ENCODE measurements at regions of chr14 and their contacts with region 1.

Region 1: GRCh38 chr14:86038387-86039042 is 508.6 kb downstream of the FLRT2 start:
- H3K4me3 Mint-ChIP-seq: no peak overlapping the region
- H3K27ac Mint-ChIP-seq: no peak overlapping the region
- H3K4me1 Mint-ChIP-seq: no peaks in the 10 kb centered on the region
- H3K27me3 Mint-ChIP-seq: no peaks in the 10 kb centered on the region

Region 2: GRCh38 chr14:85195872-85196477 is 842.5 kb before region 1 on chr14:
- intact Hi-C with region 1: loop called (anchors 5 kb)
- H3K4me3 Mint-ChIP-seq: no peak overlapping the region
- H3K27ac Mint-ChIP-seq: no peak overlapping the region
- H3K4me1 Mint-ChIP-seq: no peaks in the 10 kb centered on the region
- H3K27me3 Mint-ChIP-seq: no peaks in the 10 kb centered on the region

Region 3: GRCh38 chr14:85856430-85856829 is 182.1 kb before region 1 on chr14:
- intact Hi-C with region 1: loop called (anchors 10 kb)
- H3K4me3 Mint-ChIP-seq: no peak overlapping the region
- H3K27ac Mint-ChIP-seq: no peak overlapping the region
- H3K4me1 Mint-ChIP-seq: no peaks in the 10 kb centered on the region
- H3K27me3 Mint-ChIP-seq: no peaks in the 10 kb centered on the region

Region 4: DNA sequence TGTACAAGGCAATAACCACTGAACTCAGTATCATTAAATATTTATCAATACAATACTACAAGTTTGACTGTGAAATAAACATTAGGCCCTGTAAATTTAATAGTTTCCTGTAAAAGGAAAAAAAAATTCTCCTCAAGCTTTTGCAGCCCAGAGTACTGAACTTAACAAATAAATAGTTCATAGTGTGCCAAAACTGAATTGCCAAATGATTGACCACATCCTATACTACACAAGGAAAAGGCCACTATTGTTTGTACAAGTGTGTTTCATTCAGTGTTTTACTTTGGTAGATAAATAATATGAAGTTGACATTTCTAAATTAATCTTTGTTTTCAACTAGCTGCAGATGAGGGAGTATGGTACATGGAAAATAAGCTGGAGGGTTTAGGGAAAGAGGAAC is 128.9 kb before region 1 on chr14:
- intact Hi-C with region 1: no loop called
- H3K4me3 Mint-ChIP-seq: no peak overlapping the region
- H3K27ac Mint-ChIP-seq: no peak overlapping the region
- H3K4me1 Mint-ChIP-seq: no peaks in the 10 kb centered on the region
- H3K27me3 Mint-ChIP-seq: no peaks in the 10 kb centered on the region

Region 5: DNA sequence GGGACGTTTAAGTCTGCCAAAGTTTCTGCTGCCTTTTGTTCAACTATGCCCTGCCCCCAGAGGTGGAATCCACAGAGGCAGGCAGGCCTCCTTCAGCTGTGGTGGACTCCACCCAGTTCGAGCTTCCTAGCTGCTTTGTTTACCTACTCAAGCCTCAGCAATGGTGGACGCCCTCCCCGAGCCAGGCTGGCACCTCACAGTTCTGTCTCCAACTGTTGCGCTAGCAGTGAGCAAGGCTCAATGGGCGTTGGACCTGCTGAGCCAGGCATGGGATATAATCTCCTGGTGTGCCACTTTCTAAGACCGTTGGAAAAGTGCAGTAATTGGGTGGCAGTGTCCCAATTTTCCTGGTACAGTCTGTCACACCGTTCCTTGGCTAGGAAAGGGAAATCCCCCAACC is 63.9 kb before region 1 on chr14:
- intact Hi-C with region 1: no loop called
- H3K4me3 Mint-ChIP-seq: no peak overlapping the region
- H3K27ac Mint-ChIP-seq: no peak overlapping the region
- H3K4me1 Mint-ChIP-seq: no peaks in the 10 kb centered on the region
- H3K27me3 Mint-ChIP-seq: no peaks in the 10 kb centered on the region

Region 6: GRCh38 chr14:86902176-86902950 is 863.8 kb after region 1 on chr14:
- intact Hi-C with region 1: loop called (anchors 10 kb)
- H3K4me3 Mint-ChIP-seq: no peak overlapping the region
- H3K27ac Mint-ChIP-seq: no peak overlapping the region
- H3K4me1 Mint-ChIP-seq: no peaks in the 10 kb centered on the region
- H3K27me3 Mint-ChIP-seq: no peaks in the 10 kb centered on the region

Measured in dendritic cell treated with granulocyte-macrophage colony-stimulating factor and Interleukin-4, amounts not matched to agents 40 ng/mL and 50 ng/mL, for 4 days (primary cell).